Sigmoid colon (tissue), 7 donors: ENCODE measurements at regions of chrX and their contacts with region 1.

Region 1: DNA sequence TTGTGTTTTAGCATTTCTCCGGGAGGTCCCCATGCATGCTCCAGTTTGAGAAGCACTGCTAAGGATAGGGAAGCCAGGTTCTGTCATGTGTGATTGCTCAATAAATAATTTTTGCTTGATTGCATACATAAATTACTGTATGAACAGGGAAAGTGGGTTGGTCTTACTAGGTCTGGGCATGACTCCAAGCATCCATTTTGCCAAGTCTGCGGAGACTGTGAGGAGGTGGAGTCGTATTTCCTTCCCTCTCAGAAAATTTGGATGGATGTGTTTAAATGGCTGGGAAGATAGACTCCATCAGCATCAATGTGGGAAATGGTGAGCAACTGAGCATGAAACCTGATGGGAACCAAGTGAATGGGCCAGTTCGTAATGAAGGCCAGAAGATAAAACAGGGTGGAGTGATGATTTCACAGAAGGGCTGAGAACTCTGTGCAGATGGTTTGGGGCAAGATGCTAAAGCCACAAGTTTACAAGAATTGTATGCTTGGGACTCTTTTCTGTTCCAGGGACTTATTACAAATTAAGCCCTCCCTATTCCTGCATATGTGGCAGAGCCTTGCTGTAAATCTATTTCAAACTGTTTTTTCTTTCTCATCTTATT is 84.1 kb downstream of the NHS start:
- DNase-seq: peak; percentile 77
- H3K4me3 ChIP-seq: no peak overlapping the region
- H3K27ac ChIP-seq: peak overlapping the region in 1 of 4 donors; percentile 37
- H3K4me1 ChIP-seq: peaks cover 0 to 10% (median 0%) of the 10 kb centered on the region in 4 donors
- H3K27me3 ChIP-seq: no peaks in the 10 kb centered on the region
- CTCF ChIP-seq: no peak
- EP300 ChIP-seq: no peak
- POLR2A ChIP-seq: no peak

Region 2: GRCh38 chrX:17336377-17336776 is 122.7 kb before region 1 on chrX:
- intact Hi-C with region 1: no loop called
- DNase-seq: no peak
- H3K4me3 ChIP-seq: no peak overlapping the region
- H3K27ac ChIP-seq: no peak overlapping the region
- H3K4me1 ChIP-seq: no peaks in the 10 kb centered on the region
- H3K27me3 ChIP-seq: no peaks in the 10 kb centered on the region
- CTCF ChIP-seq: no peak
- EP300 ChIP-seq: no peak
- POLR2A ChIP-seq: no peak

Region 3: GRCh38 chrX:17405225-17405969 is 53.7 kb before region 1 on chrX:
- intact Hi-C with region 1: loop called (anchors 10 kb)
- DNase-seq: no peak
- H3K4me3 ChIP-seq: no peak overlapping the region
- H3K27ac ChIP-seq: no peak overlapping the region
- H3K4me1 ChIP-seq: peaks cover 0 to 10% (median 2%) of the 10 kb centered on the region in 4 donors
- H3K27me3 ChIP-seq: no peaks in the 10 kb centered on the region
- CTCF ChIP-seq: no peak
- EP300 ChIP-seq: no peak
- POLR2A ChIP-seq: no peak

Region 4: GRCh38 chrX:17519358-17519757 is 60.2 kb after region 1 on chrX:
- intact Hi-C with region 1: loop called (anchors 10 kb)
- DNase-seq: peak; percentile 92
- H3K4me3 ChIP-seq: no peak overlapping the region
- H3K27ac ChIP-seq: peak overlapping the region; percentile 32 to 69 (median 58)
- H3K4me1 ChIP-seq: peaks cover 0 to 35% (median 7%) of the 10 kb centered on the region in 4 donors
- H3K27me3 ChIP-seq: no peaks in the 10 kb centered on the region
- CTCF ChIP-seq: no peak
- EP300 ChIP-seq: peak in 2 of 4 donors; percentile 7 to 9
- POLR2A ChIP-seq: no peak